ENCODE measurements at regions of chr4 and their contacts with region 1.

Region 1: GRCh38 chr4:189090174-189090814 is 850.4 kb upstream of the FRG1 start:
- DNase-seq: no peak
- H3K4me3 ChIP-seq: no peak overlapping the region
- H3K27ac ChIP-seq: no peak overlapping the region
- H3K4me1 ChIP-seq: peaks cover 0 to 2% (median 0%) of the 10 kb centered on the region in 4 experiments; a peak in 1 of 7 replicates
- H3K27me3 ChIP-seq: no peaks in the 10 kb centered on the region
- CTCF ChIP-seq: peak; percentile 64 to 85 (median 74)
- EP300 ChIP-seq: no peak
- POLR2A ChIP-seq: no peak
- RAD21 ChIP-seq: peak; percentile 62 to 74

Region 2: GRCh38 chr4:188854436-188854835 is 235.9 kb before region 1 on chr4:
- CTCF ChIA-PET with region 1: no interaction called
- POLR2A ChIA-PET with region 1: no interaction called
- DNase-seq: no peak
- H3K4me3 ChIP-seq: no peak overlapping the region
- H3K27ac ChIP-seq: no peak overlapping the region
- H3K4me1 ChIP-seq: no peaks in the 10 kb centered on the region
- H3K27me3 ChIP-seq: no peaks in the 10 kb centered on the region
- CTCF ChIP-seq: no peak
- EP300 ChIP-seq: no peak
- POLR2A ChIP-seq: no peak
- RAD21 ChIP-seq: no peak

Region 3: DNA sequence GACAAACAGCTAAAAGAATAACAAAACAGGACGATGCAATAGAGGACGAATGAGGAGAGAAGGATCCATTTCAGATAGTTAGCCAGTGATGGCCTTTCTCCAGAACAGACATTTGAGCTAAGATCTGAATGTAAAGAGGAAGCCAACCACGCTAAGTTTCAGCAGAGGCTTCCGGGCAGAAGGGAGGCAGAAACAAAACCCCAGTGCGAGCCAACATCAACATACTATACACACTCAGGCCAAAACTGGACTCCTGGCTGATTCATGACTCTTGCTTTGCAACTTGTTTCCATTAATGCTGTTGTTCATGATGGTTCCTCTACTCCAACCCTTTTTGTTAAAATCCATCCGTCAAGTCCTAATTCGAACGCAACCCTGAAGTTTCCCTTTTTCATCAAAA is 220.7 kb before region 1 on chr4:
- CTCF ChIA-PET with region 1: no interaction called
- POLR2A ChIA-PET with region 1: no interaction called
- DNase-seq: no peak
- H3K4me3 ChIP-seq: no peak overlapping the region
- H3K27ac ChIP-seq: no peak overlapping the region
- H3K4me1 ChIP-seq: no peaks in the 10 kb centered on the region
- H3K27me3 ChIP-seq: no peaks in the 10 kb centered on the region
- CTCF ChIP-seq: no peak
- EP300 ChIP-seq: no peak
- POLR2A ChIP-seq: no peak
- RAD21 ChIP-seq: no peak

Region 4: GRCh38 chr4:189060104-189060503 is 30.2 kb before region 1 on chr4:
- CTCF ChIA-PET with region 1: interaction called, 25 read pairs
- POLR2A ChIA-PET with region 1: no interaction called
- DNase-seq: no peak
- H3K4me3 ChIP-seq: no peak overlapping the region
- H3K27ac ChIP-seq: peak overlapping the region; percentile 66; the same call in 1 of the 2 replicates
- H3K4me1 ChIP-seq: peaks cover 10 to 17% (median 13%) of the 10 kb centered on the region in 4 experiments
- H3K27me3 ChIP-seq: no peaks in the 10 kb centered on the region
- CTCF ChIP-seq: no peak
- EP300 ChIP-seq: no peak
- POLR2A ChIP-seq: no peak
- RAD21 ChIP-seq: no peak

Region 5: DNA sequence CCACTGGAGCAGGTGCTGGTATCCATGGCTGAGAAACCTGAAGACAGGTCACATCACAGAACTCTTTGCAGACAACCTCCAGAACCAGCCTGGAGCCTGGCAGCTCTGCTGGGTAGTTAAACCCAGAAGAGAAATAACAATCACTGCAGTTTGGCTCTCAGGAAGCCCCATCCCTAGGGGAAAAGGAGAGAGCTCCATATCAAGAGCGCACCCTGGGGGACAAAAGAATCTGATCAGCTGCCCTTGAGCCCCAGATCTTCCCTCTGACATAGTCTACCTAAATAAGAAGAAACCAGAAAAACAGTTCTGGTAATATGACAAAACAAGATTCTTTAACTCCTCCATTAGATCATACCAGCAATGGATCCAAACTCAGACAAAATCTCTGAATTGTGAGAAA is 27.1 kb after region 1 on chr4:
- CTCF ChIA-PET with region 1: interaction called, 21 read pairs
- POLR2A ChIA-PET with region 1: no interaction called
- DNase-seq: no peak
- H3K4me3 ChIP-seq: no peak overlapping the region
- H3K27ac ChIP-seq: no peak overlapping the region
- H3K4me1 ChIP-seq: no peaks in the 10 kb centered on the region
- H3K27me3 ChIP-seq: no peaks in the 10 kb centered on the region
- CTCF ChIP-seq: peak; percentile 0 to 29 (median 3); a peak in 3 of 4 replicates
- EP300 ChIP-seq: no peak
- POLR2A ChIP-seq: no peak
- RAD21 ChIP-seq: peak; percentile 50 to 58

Measured in H1 (cell line).